Natural killer cell (primary cell): ENCODE measurements at regions of chr1 and their contacts with region 1.

Region 1: GRCh38 chr1:93846211-93846991 is 32.6 kb downstream of the DNTTIP2 start:
- DNase-seq: peak; percentile 84 to 94
- ATAC-seq: peak; percentile 45 to 71 (median 62)
- H3K4me3 ChIP-seq: peak overlapping the region; percentile 98
- H3K4me3 Mint-ChIP-seq: peak overlapping the region; percentile 97
- H3K27ac ChIP-seq: peak overlapping the region; percentile 96
- H3K27ac Mint-ChIP-seq: peak overlapping the region; percentile 95 to 99
- H3K4me1 ChIP-seq: peaks cover 25% of the 10 kb centered on the region
- H3K4me1 Mint-ChIP-seq: peaks cover 41% of the 10 kb centered on the region in 2 donors
- H3K27me3 ChIP-seq: no peaks in the 10 kb centered on the region
- H3K27me3 Mint-ChIP-seq: peaks cover 0 to 3% of the 10 kb centered on the region in 2 donors
- CTCF ChIP-seq: no peak

Region 2: DNA sequence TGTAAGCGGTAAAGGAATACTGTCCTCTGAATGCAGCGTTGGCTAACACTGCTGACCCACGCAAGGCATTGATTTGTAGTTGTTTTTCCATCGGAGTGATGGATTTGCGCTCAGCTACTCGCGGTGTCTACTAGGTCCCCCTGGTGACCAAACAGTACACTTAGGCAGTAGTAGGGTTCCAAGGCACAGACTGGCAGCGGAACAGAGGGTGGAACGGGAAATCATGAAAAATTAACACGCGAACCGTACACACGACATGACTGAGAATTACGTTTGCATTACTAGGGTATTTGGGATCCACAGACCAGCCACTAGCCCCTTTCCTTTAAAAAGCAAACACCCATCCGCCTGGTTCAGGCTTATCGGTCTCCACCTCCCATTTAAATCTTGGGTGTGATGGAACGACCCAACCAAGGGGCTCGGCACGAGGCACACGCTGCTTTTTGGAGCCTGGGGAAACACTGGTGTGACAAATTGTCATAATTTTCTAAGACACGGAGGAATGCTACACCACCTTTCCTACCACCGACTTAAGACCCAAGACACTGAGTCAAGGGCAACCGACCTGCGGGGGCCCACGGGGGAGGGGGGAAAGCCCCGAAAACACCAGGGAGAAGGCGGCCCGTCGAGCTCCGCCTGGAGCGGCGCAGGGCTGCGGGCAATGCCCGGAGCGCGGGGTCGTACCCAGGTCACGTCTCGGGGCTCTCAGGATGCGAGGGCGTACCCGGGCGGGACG is 885.8 kb before region 1 on chr1:
- intact Hi-C with region 1: loop called (anchors 10 kb)
- DNase-seq: peak; percentile 69 to 89
- ATAC-seq: peak; percentile 34 to 63 (median 39)
- H3K4me3 ChIP-seq: peak overlapping the region; percentile 91
- H3K4me3 Mint-ChIP-seq: peak overlapping the region; percentile 95
- H3K27ac ChIP-seq: peak overlapping the region; percentile 92
- H3K27ac Mint-ChIP-seq: peak overlapping the region; percentile 93 to 95
- H3K4me1 ChIP-seq: peaks cover 46% of the 10 kb centered on the region
- H3K4me1 Mint-ChIP-seq: peaks cover 39 to 40% of the 10 kb centered on the region in 2 donors
- H3K27me3 ChIP-seq: no peaks in the 10 kb centered on the region
- H3K27me3 Mint-ChIP-seq: no peaks in the 10 kb centered on the region
- CTCF ChIP-seq: peak; percentile 49

Region 3: DNA sequence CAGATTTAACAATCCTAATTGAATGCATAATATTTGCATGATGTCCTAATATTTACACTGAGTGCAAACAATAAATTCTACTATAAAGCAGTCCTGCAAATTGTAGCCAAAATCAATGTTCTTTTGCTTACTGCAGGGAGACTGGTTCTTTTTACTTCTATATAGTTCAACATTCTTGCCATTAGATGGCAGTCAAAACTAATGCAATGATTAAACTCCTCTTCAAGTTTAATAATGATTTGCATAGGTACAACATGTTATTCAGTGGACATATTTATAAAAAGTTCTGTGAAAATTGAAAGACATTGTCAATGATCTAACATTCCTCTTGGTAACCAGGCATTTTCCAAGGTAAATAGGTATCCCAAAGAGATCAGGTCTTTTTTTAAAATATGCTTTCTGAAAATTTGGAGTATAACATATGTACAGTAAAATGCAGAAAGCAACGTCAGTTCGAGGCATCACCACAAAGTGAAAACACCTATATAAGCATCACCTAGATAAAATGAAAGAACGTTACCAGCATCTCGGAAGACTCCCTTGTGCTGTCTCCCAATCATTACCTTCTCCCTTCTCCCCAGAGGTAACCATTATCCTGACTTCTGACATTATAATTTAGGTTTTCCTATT is 408.3 kb before region 1 on chr1:
- intact Hi-C with region 1: loop called (anchors 10 kb)
- DNase-seq: peak in 1 of 2 donors; percentile 63
- ATAC-seq: peak in 2 of 3 donors; percentile 51 to 52
- H3K4me3 ChIP-seq: no peak overlapping the region
- H3K4me3 Mint-ChIP-seq: no peak overlapping the region
- H3K27ac ChIP-seq: no peak overlapping the region
- H3K27ac Mint-ChIP-seq: no peak overlapping the region
- H3K4me1 ChIP-seq: no peaks in the 10 kb centered on the region
- H3K4me1 Mint-ChIP-seq: no peaks in the 10 kb centered on the region
- H3K27me3 ChIP-seq: peaks cover 6% of the 10 kb centered on the region
- H3K27me3 Mint-ChIP-seq: peaks cover 7 to 26% of the 10 kb centered on the region in 2 donors
- CTCF ChIP-seq: peak; percentile 50

Region 4: GRCh38 chr1:93749894-93750301 is 96.5 kb before region 1 on chr1:
- intact Hi-C with region 1: loop called (anchors 2 kb)
- DNase-seq: peak in 1 of 2 donors; percentile 13
- ATAC-seq: no peak
- H3K4me3 ChIP-seq: no peak overlapping the region
- H3K4me3 Mint-ChIP-seq: peak overlapping the region; percentile 79
- H3K27ac ChIP-seq: peak overlapping the region; percentile 82
- H3K27ac Mint-ChIP-seq: peak overlapping the region; percentile 97
- H3K4me1 ChIP-seq: peaks cover 29% of the 10 kb centered on the region
- H3K4me1 Mint-ChIP-seq: peaks cover 45 to 46% of the 10 kb centered on the region in 2 donors
- H3K27me3 ChIP-seq: no peaks in the 10 kb centered on the region
- H3K27me3 Mint-ChIP-seq: peaks cover 0 to 3% of the 10 kb centered on the region in 2 donors
- CTCF ChIP-seq: no peak

Region 5: DNA sequence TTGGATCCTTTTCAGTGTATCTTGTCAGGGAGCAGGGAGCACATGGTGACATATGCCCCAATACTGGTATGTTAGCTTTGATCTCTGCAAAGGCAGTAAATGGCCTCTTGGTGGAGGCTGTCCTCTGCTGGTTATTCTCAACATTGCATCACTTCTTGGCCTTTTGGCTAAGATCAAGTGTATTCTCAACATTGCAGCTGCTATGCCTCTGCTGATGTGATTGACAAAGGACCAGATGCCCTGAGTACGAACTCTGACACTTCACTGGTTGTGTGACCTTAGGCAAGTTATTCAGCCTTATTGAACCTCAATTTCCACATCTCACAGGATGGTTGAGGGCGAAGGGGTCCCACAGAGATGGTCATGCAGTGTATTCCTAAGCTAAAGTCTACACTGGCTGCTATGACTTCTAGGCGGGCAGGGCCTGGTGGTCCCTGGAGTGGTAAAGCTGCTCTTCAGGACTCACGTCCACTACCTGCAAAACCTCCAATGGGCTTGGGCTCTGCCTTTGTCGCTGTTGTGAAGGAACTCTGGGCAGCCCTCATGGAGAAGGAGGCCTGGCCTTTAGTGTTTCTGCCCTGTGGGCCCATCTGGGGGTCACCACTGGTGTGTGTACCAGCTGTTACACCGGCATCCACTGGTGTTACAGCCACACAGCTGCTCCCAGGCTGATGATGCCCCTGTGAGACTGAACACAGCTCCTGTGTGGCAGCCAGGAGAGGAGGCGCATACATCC is 32.2 kb before region 1 on chr1:
- intact Hi-C with region 1: loop called (anchors 1 kb)
- DNase-seq: peak; percentile 40 to 70
- ATAC-seq: peak; percentile 60 to 69 (median 60)
- H3K4me3 ChIP-seq: no peak overlapping the region
- H3K4me3 Mint-ChIP-seq: no peak overlapping the region
- H3K27ac ChIP-seq: no peak overlapping the region
- H3K27ac Mint-ChIP-seq: no peak overlapping the region
- H3K4me1 ChIP-seq: peaks cover 16% of the 10 kb centered on the region
- H3K4me1 Mint-ChIP-seq: peaks cover 22 to 23% of the 10 kb centered on the region in 2 donors
- H3K27me3 ChIP-seq: no peaks in the 10 kb centered on the region
- H3K27me3 Mint-ChIP-seq: no peaks in the 10 kb centered on the region
- CTCF ChIP-seq: peak; percentile 93

Region 6: DNA sequence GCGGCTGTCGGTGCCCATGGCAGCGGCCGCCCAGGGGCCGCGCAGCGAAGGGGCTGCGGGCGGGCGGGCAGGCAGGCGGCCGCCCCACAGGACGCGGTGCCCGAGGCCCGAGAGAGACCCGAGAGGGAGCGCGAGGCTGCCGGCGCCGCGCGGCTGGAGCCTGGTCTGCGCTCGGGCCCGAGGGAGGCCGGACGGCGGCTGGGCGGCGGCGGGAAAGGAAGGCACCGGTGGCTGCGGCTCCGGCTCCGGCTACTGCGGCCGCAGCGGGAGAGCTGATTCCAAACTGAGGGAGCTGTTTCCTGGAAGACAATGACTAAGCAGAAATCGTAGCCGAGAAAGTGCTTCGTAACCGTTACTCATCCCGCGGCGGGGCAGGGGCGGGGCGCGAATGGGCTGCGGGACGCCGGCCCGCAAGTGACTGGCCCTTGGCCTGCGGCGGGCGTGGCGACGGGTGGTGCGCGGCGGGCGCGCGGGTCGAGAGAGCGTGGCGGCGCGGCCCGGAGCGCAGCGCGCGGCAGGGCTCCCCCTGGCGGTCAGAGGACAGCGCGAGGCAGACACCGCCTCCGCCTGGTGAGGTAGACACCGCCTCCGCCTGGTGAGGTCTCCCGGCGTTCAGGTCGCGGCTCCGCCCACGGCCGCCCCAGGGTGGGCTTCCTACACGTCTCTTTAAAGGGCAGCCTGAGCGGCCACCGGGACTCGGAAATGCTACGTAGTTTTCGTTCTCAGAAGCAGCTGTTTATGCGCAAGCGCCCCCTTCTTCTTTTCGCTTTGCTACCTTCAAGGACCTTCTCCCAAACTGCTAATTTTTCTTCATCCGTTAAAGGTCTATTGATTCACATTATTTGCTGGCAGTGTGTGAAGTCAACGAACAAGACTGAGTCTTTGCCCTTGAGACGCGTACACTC is 63.0 kb after region 1 on chr1 and contains the start of gene GCLM:
- intact Hi-C with region 1: loop called (anchors 1 kb)
- DNase-seq: peak; percentile 92 to 95
- ATAC-seq: peak; percentile 89 to 98 (median 92)
- H3K4me3 ChIP-seq: peak within 1 kb of the TSS; percentile 66
- H3K4me3 Mint-ChIP-seq: peak within 1 kb of the TSS; percentile 96
- H3K27ac ChIP-seq: peak within 1 kb of the TSS; percentile 91
- H3K27ac Mint-ChIP-seq: peak within 1 kb of the TSS; percentile 94 to 97
- H3K4me1 ChIP-seq: peaks cover 13% of the 10 kb centered on the region
- H3K4me1 Mint-ChIP-seq: peaks cover 36% of the 10 kb centered on the region in 2 donors
- H3K27me3 ChIP-seq: no peaks in the 10 kb centered on the region
- H3K27me3 Mint-ChIP-seq: no peaks in the 10 kb centered on the region
- CTCF ChIP-seq: peak; percentile 96
- total RNA-seq, gene GCLM: 16.1 to 25.5 (median 18.6) TPM

Region 7: DNA sequence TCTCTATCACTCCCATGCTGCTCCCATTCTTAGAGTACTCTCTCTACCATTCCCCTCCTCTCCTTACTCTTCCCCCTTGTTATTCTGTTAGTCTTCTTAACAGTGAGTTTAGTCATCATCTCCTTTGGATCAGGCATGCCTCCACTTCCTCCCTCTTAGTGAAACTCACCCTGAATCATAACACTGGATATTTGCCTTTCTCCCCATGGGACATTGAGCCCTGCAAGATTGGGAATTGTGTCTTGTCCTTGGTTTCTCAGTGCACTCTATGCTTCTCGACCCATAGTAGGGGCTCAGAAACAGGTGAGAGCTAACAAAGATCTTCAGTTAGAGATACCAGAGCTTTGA is 131.2 kb after region 1 on chr1:
- intact Hi-C with region 1: no loop called
- DNase-seq: no peak
- ATAC-seq: no peak
- H3K4me3 ChIP-seq: no peak overlapping the region
- H3K4me3 Mint-ChIP-seq: no peak overlapping the region
- H3K27ac ChIP-seq: no peak overlapping the region
- H3K27ac Mint-ChIP-seq: no peak overlapping the region
- H3K4me1 ChIP-seq: no peaks in the 10 kb centered on the region
- H3K4me1 Mint-ChIP-seq: peaks cover 0 to 5% of the 10 kb centered on the region in 2 donors
- H3K27me3 ChIP-seq: no peaks in the 10 kb centered on the region
- H3K27me3 Mint-ChIP-seq: no peaks in the 10 kb centered on the region
- CTCF ChIP-seq: no peak

Region 8: DNA sequence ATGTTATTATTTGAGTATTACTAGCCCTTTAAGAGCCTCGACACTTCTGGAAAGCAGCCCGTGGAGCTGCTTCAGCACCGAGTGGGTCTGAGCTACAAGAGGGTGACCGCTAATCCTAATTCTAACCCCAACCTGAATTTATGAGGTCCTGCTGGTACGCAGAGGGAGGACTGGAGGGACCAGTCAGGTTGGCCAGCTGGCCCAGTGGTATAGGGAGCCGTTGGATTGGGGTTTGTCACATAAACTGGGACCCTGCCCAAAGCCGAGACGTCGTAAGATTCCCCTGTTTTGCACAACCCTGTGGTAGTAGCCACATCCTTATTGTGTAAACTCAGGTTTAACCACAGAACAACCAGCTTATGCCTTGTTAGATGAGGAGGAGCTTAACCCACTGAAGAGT is 755.9 kb after region 1 on chr1:
- intact Hi-C with region 1: loop called (anchors 10 kb)
- DNase-seq: peak; percentile 45 to 56
- ATAC-seq: peak; percentile 91 to 96 (median 93)
- H3K4me3 ChIP-seq: peak overlapping the region; percentile 2
- H3K4me3 Mint-ChIP-seq: peak overlapping the region; percentile 90
- H3K27ac ChIP-seq: no peak overlapping the region
- H3K27ac Mint-ChIP-seq: peak overlapping the region; percentile 73 to 87
- H3K4me1 ChIP-seq: peaks cover 11% of the 10 kb centered on the region
- H3K4me1 Mint-ChIP-seq: peaks cover 28 to 30% of the 10 kb centered on the region in 2 donors
- H3K27me3 ChIP-seq: peaks cover 39% of the 10 kb centered on the region
- H3K27me3 Mint-ChIP-seq: peaks cover 77 to 85% of the 10 kb centered on the region in 2 donors
- CTCF ChIP-seq: no peak